Calu3 (cell line): ENCODE measurements at regions of chr4 and their contacts with region 1.

Region 1: DNA sequence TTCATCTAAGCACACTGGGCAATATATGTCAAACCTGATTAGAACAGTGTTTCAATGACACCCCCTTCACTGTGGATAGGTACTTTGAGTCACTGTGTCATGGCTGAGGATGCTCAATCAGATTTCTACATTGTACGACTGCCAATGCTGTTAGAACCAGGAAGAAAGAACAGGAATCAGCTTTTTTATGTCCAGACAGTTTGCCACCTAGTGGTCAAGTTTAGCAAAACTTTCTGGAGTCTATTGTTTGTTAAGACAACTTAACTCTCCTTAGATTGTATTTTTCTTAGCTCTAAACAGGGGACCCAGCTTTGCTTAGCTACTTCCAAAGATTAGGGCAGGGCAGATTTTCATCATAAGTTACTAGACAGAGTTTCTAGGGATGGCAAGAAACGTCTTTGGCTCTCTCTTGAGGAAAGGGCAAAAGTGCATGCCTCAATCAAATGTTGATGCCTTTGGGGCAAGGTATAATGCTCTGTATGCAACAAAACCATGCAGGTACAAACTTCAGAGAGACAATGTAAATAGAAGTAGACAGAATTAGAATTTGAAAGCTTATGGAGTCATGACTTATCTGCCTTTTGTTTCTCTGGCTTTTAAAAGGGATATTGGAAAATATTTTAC is 40.5 kb upstream of the BMP3 start:
- DNase-seq: peak; percentile 44
- H3K4me3 Mint-ChIP-seq: no peak overlapping the region
- H3K27ac Mint-ChIP-seq: no peak overlapping the region
- H3K4me1 Mint-ChIP-seq: no peaks in the 10 kb centered on the region
- H3K27me3 Mint-ChIP-seq: no peaks in the 10 kb centered on the region
- CTCF ChIP-seq: peak; percentile 51

Region 2: DNA sequence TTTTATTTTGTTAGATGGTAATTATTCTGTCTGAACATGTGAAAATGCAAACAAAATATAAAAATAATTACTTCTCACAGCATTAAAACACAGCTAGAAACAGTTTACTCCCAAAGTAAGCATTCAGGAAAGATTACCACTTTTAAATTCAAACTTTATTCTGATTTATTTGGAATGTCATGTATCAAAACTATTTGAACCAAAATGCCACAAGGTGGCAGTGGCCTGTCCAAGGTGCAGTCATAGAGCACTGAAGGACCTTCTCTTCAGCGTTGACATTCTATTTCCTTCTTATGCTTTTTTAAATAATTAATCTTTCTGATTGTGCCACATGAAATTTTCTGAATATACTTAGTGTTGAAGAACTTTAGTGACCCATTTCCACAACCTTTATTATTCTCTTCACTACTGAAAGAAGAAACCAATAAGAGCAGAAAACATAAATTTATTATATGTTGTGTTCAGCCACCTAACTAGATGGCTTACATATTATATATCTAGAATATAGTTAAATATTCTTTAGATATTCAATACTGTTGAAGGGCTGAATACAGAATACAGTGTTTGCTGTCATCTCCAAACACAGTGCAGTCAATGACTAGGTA is 370.9 kb before region 1 on chr4:
- CTCF ChIA-PET with region 1: no interaction called
- intact Hi-C with region 1: loop called (anchors 2 kb)
- DNase-seq: peak; percentile 5
- H3K4me3 Mint-ChIP-seq: no peak overlapping the region
- H3K27ac Mint-ChIP-seq: no peak overlapping the region
- H3K4me1 Mint-ChIP-seq: no peaks in the 10 kb centered on the region
- H3K27me3 Mint-ChIP-seq: no peaks in the 10 kb centered on the region
- CTCF ChIP-seq: peak; percentile 12